Heart left ventricle (tissue), 16 donors: ENCODE measurements at regions of chr15 and their contacts with region 1.

Region 1: GRCh38 chr15:34587717-34588674 is 4.5 kb upstream of the GOLGA8B start:
- DNase-seq: peak in 3 of 5 donors; percentile 43 to 62 (median 45)
- ATAC-seq: peak in 3 of 4 donors; percentile 61 to 76 (median 75)
- H3K4me3 ChIP-seq: peak overlapping the region in 9 of 12 donors; percentile 0 to 44 (median 29)
- H3K27ac ChIP-seq: peak overlapping the region in 2 of 12 donors; percentile 17 to 42
- H3K4me1 ChIP-seq: peaks cover 0 to 12% (median 5%) of the 10 kb centered on the region in 12 donors
- H3K27me3 ChIP-seq: peaks cover 0 to 14% (median 0%) of the 10 kb centered on the region in 9 donors
- CTCF ChIP-seq: peak; percentile 56 to 89 (median 76)
- POLR2A ChIP-seq: no peak

Region 2: GRCh38 chr15:34065941-34066340 is 522.1 kb before region 1 on chr15:
- intact Hi-C with region 1: loop called in 2 of 10 experiments (anchors 5 to 10 kb)
- DNase-seq: no peak
- ATAC-seq: no peak
- H3K4me3 ChIP-seq: no peak overlapping the region
- H3K27ac ChIP-seq: no peak overlapping the region
- H3K4me1 ChIP-seq: peaks cover 0 to 5% (median 0%) of the 10 kb centered on the region in 12 donors
- H3K27me3 ChIP-seq: no peaks in the 10 kb centered on the region
- CTCF ChIP-seq: no peak
- POLR2A ChIP-seq: no peak

Region 3: DNA sequence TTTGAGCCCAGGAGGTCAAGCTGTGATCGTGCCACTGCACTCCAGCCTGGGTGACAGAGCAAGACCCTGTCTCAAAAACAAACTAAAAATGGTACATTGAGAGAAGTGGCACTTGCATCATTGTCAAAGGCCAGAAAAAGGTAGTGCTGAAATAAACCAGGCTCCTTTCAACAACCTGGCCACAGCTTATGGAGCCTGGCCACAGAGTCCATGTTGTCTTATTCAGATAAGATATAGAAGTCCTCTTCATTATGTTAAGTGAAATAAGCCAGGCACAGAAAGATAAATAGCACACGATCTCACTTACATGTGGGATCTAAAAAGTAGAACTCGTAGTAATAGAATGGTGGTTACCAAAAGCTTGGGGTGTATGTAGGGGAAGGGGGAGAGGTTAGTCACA is 328.4 kb before region 1 on chr15:
- intact Hi-C with region 1: loop called in 1 of 10 experiments (anchors 10 kb)
- DNase-seq: peak in 4 of 5 donors; percentile 42 to 60 (median 50)
- ATAC-seq: peak; percentile 89 to 92 (median 90)
- H3K4me3 ChIP-seq: no peak overlapping the region
- H3K27ac ChIP-seq: peak overlapping the region; percentile 2 to 82 (median 60)
- H3K4me1 ChIP-seq: peaks cover 0 to 23% (median 2%) of the 10 kb centered on the region in 12 donors
- H3K27me3 ChIP-seq: no peaks in the 10 kb centered on the region
- CTCF ChIP-seq: no peak
- POLR2A ChIP-seq: no peak

Region 4: GRCh38 chr15:34501131-34501530 is 86.9 kb before region 1 on chr15:
- intact Hi-C with region 1: loop called in 1 of 10 experiments (anchors 10 kb)
- DNase-seq: no peak
- ATAC-seq: no peak
- H3K4me3 ChIP-seq: no peak overlapping the region
- H3K27ac ChIP-seq: no peak overlapping the region
- H3K4me1 ChIP-seq: peaks cover 0 to 6% (median 0%) of the 10 kb centered on the region in 12 donors
- H3K27me3 ChIP-seq: peaks cover 0 to 33% (median 5%) of the 10 kb centered on the region in 9 donors
- CTCF ChIP-seq: no peak
- POLR2A ChIP-seq: no peak

Region 5: DNA sequence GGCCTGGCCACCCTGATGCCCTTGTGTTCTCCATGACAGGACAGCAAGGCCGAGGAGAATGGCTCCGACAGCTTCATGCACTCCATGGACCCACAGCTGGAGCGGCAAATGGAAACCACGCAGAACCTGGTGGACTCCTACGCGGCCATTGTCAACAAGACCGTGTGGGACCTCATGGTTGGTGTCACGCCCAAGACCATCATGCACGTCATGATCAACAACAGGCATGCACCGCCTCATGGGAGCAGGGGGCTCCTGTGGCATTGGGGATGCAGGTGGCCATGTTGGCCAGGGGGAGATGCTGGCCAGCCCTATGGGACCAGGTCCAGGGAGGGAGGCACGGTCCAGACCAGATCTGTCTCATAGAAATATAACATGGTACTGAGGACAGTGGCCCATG is 67.4 kb before region 1 on chr15:
- intact Hi-C with region 1: loop called in 2 of 10 experiments (anchors 5 to 10 kb)
- DNase-seq: peak in 1 of 5 donors; percentile 51
- ATAC-seq: no peak
- H3K4me3 ChIP-seq: no peak overlapping the region
- H3K27ac ChIP-seq: no peak overlapping the region
- H3K4me1 ChIP-seq: peaks cover 0 to 5% (median 0%) of the 10 kb centered on the region in 12 donors
- H3K27me3 ChIP-seq: no peaks in the 10 kb centered on the region
- CTCF ChIP-seq: no peak
- POLR2A ChIP-seq: no peak